CD8-positive, alpha-beta T cell (primary cell): ENCODE measurements at regions of chr11 and their contacts with region 1.

Region 1: GRCh38 chr11:56577621-56578020 is at the start of gene OR5M10:
- DNase-seq: no peak
- ATAC-seq: no peak
- H3K4me3 ChIP-seq: no peak within 1 kb of the TSS
- H3K4me3 Mint-ChIP-seq: no peak within 1 kb of the TSS
- H3K27ac ChIP-seq: no peak within 1 kb of the TSS
- H3K27ac Mint-ChIP-seq: no peak within 1 kb of the TSS
- H3K4me1 ChIP-seq: no peaks in the 10 kb centered on the region
- H3K4me1 Mint-ChIP-seq: no peaks in the 10 kb centered on the region
- H3K27me3 ChIP-seq: no peaks in the 10 kb centered on the region
- H3K27me3 Mint-ChIP-seq: no peaks in the 10 kb centered on the region
- CTCF ChIP-seq: no peak
- total RNA-seq, gene OR5M10: not detected

Region 2: GRCh38 chr11:56331861-56332491 is 245.6 kb before region 1 on chr11:
- CTCF ChIA-PET with region 1: no interaction called
- POLR2A ChIA-PET with region 1: no interaction called
- intact Hi-C with region 1: no loop called
- DNase-seq: peak in 1 of 9 experiments; percentile 1
- ATAC-seq: no peak
- H3K4me3 ChIP-seq: no peak overlapping the region
- H3K4me3 Mint-ChIP-seq: no peak overlapping the region
- H3K27ac ChIP-seq: no peak overlapping the region
- H3K27ac Mint-ChIP-seq: no peak overlapping the region
- H3K4me1 ChIP-seq: no peaks in the 10 kb centered on the region
- H3K4me1 Mint-ChIP-seq: no peaks in the 10 kb centered on the region
- H3K27me3 ChIP-seq: no peaks in the 10 kb centered on the region
- H3K27me3 Mint-ChIP-seq: no peaks in the 10 kb centered on the region
- CTCF ChIP-seq: no peak

Region 3: DNA sequence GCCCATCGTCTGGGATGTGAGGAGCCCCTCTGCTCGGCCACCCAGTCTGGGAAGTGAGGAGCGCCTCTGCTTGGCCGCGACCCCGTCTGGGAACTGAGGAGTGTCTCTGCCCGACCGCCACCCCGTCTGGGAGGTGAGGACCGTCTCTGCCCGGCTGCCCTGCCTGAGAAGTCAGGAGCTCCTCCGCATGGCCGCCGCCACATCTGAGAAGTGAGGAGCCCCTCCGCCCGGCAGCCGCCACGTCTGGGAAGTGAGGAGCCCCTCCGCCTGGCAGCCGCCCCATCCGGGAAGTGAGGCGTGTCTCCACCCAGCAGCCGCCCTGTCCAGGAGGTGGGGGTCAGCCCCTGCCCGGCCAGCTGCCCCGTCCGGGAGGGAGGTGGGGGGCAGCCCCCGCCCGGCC is 80.6 kb before region 1 on chr11:
- CTCF ChIA-PET with region 1: no interaction called
- POLR2A ChIA-PET with region 1: no interaction called
- intact Hi-C with region 1: loop called in 1 of 2 experiments (anchors 2 kb)
- DNase-seq: no peak
- ATAC-seq: no peak
- H3K4me3 ChIP-seq: no peak overlapping the region
- H3K4me3 Mint-ChIP-seq: no peak overlapping the region
- H3K27ac ChIP-seq: no peak overlapping the region
- H3K27ac Mint-ChIP-seq: no peak overlapping the region
- H3K4me1 ChIP-seq: no peaks in the 10 kb centered on the region
- H3K4me1 Mint-ChIP-seq: no peaks in the 10 kb centered on the region
- H3K27me3 ChIP-seq: no peaks in the 10 kb centered on the region
- H3K27me3 Mint-ChIP-seq: no peaks in the 10 kb centered on the region
- CTCF ChIP-seq: no peak

Region 4: DNA sequence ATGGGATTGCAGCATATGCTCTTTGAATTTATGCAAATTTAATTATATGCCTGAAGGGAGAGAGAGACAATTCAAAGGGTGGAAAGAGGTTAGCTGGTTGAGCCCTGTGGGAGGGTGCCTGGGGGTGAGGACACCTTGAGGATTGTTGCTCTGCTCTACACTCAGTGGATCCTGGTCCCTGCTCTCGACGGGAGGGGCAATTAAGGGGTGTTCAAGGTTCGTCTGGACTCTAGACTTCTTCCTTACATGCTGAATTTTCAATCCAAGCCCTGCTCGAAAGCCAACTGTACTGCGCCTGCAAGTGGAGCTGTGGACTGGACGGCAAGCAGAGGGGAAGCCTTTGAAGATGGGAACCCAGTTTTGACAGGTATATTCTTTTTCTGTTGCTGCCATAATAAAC is 19.0 kb before region 1 on chr11:
- CTCF ChIA-PET with region 1: no interaction called
- POLR2A ChIA-PET with region 1: no interaction called
- intact Hi-C with region 1: no loop called
- DNase-seq: no peak
- ATAC-seq: no peak
- H3K4me3 ChIP-seq: no peak overlapping the region
- H3K4me3 Mint-ChIP-seq: no peak overlapping the region
- H3K27ac ChIP-seq: no peak overlapping the region
- H3K27ac Mint-ChIP-seq: no peak overlapping the region
- H3K4me1 ChIP-seq: no peaks in the 10 kb centered on the region
- H3K4me1 Mint-ChIP-seq: no peaks in the 10 kb centered on the region
- H3K27me3 ChIP-seq: no peaks in the 10 kb centered on the region
- H3K27me3 Mint-ChIP-seq: no peaks in the 10 kb centered on the region
- CTCF ChIP-seq: no peak